Esophagus muscularis mucosa (tissue), 4 donors: ENCODE measurements at regions of chrX and their contacts with region 1.

Region 1: GRCh38 chrX:70554081-70554480 is 109.4 kb downstream of the DLG3 start:
- DNase-seq: no peak
- H3K4me3 ChIP-seq: no peak overlapping the region
- H3K27ac ChIP-seq: no peak overlapping the region
- H3K4me1 ChIP-seq: peaks cover 0 to 3% (median 0%) of the 10 kb centered on the region in 4 donors
- H3K27me3 ChIP-seq: no peaks in the 10 kb centered on the region
- CTCF ChIP-seq: peak in 2 of 3 experiments; percentile 21 to 38
- EP300 ChIP-seq: no peak
- POLR2A ChIP-seq: no peak

Region 2: DNA sequence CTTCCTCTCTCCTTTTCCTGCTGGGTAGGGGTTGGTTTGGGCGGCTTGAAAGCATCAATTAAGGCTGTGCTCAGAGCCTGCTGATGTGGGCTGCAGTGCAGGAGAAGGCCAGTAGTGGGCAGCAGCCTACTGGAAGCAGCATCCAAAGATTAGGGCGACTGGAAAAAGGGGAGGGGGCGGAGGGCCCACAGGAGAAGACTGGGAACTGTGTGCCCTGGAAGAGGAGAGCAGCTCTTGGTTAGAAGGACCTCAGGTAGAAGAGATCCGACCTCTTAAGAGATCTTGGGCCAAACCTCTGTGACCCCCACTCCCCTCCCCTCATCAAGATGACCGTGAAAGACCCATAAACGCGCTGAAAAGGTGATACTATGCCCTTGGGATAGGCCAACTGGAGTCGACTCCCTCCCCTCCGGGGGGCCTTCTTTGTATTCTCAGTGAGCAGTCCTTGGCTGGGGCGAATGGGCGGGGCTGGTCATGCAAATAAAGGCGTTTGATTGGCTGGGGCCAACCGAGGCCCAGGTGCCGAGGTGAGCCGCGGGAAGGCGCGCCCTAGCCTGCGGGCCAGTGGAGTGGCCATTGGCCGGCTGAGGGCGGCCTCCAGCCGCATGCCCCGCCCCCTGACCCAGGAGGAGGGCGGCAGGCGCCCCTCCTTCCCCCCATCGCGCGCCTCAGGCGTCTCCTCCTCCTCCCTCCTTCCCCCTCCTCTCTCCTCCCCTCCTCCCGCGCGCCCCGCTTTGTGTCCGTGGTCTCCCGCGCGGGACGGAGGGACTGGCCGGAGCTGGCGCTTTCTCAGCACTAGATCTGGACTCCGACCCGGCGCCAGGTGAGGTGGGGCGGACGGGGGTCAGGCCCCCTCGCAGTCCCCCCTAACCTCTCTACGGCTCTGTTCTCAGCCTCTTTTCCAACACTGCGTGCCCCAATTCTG is 99.4 kb before region 1 on chrX:
- intact Hi-C with region 1: loop called (anchors 2 kb)
- DNase-seq: no peak
- H3K4me3 ChIP-seq: peak overlapping the region; percentile 57 to 67 (median 62)
- H3K27ac ChIP-seq: peak overlapping the region; percentile 86 to 90 (median 88)
- H3K4me1 ChIP-seq: peaks cover 8 to 47% (median 34%) of the 10 kb centered on the region in 4 donors
- H3K27me3 ChIP-seq: peaks cover 0 to 10% (median 0%) of the 10 kb centered on the region in 4 donors
- CTCF ChIP-seq: peak; percentile 79 to 88 (median 81)
- EP300 ChIP-seq: no peak
- POLR2A ChIP-seq: no peak